Spleen (tissue), 13 donors: ENCODE measurements at regions of chr11 and their contacts with region 1.

Region 1: GRCh38 chr11:75532200-75533048 is 6.7 kb upstream of the GDPD5 start:
- DNase-seq: peak; percentile 90
- H3K4me3 ChIP-seq: no peak overlapping the region
- H3K27ac ChIP-seq: peak overlapping the region in 4 of 8 donors; percentile 68 to 79 (median 70)
- H3K4me1 ChIP-seq: peaks cover 15 to 63% (median 39%) of the 10 kb centered on the region in 6 donors
- H3K27me3 ChIP-seq: no peaks in the 10 kb centered on the region
- CTCF ChIP-seq: peak; percentile 72 to 93 (median 86)
- POLR2A ChIP-seq: no peak

Region 2: GRCh38 chr11:75394085-75394840 is 138.2 kb before region 1 on chr11:
- intact Hi-C with region 1: loop called (anchors 5 kb)
- DNase-seq: no peak
- H3K4me3 ChIP-seq: no peak overlapping the region
- H3K27ac ChIP-seq: peak overlapping the region in 5 of 8 donors; percentile 51 to 75 (median 62)
- H3K4me1 ChIP-seq: peaks cover 0 to 31% (median 10%) of the 10 kb centered on the region in 6 donors
- H3K27me3 ChIP-seq: peaks cover 0 to 6% (median 0%) of the 10 kb centered on the region in 7 donors
- CTCF ChIP-seq: no peak
- POLR2A ChIP-seq: no peak

Region 3: DNA sequence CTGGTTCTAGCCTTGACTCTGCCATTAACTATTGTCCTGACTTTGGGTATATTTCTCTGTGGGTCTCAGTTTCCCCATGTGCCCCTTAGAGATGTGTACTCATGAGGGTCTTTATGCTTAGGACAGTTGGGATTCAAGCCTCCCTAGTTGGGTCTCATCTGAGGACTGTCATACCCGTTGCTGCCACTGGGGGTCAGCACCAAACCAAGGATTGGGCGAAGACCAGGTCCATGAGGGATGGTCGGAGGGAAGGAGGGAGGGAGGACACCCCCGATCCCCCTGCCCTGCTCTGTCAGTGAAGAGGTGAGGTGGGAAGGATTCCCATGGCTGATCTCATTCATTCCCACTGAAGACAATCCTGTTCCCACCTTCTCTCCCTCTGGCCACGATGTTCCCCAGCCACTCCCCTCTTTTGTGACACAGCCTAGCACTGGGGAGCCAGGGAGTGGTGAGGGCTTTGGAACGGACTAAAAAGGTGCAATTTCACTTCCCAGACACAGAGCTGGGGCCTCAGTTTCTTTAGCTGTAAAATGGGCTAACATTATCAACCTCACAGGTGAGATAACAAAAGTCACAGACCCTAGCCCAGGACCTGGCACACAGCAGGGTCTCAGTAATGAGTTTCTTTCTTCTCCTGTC is 87.0 kb before region 1 on chr11:
- intact Hi-C with region 1: loop called (anchors 2 kb)
- DNase-seq: peak; percentile 88
- H3K4me3 ChIP-seq: no peak overlapping the region
- H3K27ac ChIP-seq: peak overlapping the region in 2 of 8 donors; percentile 13 to 35
- H3K4me1 ChIP-seq: peaks cover 0 to 15% (median 0%) of the 10 kb centered on the region in 6 donors
- H3K27me3 ChIP-seq: no peaks in the 10 kb centered on the region
- CTCF ChIP-seq: peak; percentile 89 to 98 (median 94)
- POLR2A ChIP-seq: no peak